Head of caudate nucleus (tissue), 42 donors: ENCODE measurements at regions of chr10 and their contacts with region 1.

Region 1: DNA sequence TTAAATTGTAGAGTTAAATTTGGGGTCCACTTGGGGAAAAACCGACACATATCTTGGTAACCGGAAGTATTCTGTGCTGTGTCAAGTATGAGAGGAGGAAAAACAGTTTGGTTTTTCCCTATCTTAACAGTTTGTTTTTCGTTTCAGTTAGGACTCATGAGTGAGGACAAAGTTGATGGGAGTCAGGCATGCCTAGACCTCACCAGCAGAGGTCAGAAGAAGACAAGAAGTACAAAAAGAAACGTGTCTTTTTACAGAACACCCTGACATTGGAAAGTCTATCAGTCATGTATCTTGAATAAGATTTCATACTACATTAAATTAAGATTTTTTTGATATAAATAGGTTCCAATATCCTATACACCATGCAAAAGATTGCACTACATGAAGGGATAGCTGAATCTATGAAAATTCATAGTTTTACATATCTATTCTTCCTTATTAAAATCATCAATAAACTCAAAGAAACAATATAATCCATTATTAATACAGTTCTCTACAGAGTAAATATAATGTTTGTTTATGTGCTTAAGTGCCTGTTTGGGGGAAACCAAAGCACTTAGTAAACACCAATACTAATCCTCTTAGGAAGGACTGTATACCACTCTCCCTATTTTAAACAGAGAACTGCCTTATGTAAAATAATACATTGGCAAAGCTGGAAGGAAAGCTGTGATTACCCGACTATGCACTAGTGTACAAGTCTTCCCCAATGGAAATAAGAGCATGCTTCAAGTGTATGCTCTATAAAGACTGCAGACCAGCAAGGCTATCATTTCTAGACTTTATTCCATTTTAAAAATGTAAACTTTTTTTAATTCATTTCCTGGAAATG is 95.6 kb downstream of the USP6NL start:
- DNase-seq: peak in 34 of 42 donors; percentile 9 to 80 (median 57)

Region 2: DNA sequence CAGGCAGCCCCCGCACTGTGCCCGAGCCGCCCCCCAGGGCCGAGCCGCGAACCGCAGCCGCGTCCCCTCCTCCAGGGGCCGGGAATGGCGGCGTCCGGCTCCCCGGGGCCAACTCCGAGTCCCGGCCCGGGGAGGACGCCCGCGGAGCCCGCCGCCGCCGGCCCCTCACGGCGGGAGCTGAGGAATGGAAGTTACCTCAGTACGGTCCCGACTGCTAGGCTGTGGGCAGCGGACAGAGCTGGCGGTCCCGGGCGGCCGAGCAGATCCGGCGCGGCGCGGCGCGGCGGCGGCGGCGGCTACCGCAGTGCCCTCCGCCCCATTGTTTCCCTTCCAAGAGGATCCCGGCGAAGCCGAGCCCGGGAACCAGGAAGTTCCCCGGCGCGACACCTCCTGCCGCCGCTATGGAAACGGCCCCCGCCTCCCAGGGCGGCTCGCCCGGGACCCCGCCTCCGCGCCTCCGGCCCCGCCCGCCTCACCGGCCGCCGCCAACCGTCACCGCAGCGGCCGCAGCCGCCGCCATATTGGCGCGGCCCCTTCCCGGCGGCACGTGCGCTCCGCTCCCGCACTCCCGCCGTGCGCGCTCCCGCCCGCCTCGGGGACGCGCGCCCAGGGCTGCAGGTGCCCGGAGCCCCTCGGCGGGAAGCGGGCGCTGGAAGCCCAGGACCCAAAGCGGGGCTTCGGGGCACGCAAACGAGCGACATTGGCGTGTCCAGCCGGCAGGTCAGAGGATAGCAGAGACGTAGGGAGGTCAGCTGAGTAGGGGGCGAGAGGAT is 95.6 kb after region 1 on chr10 and contains the start of gene USP6NL:
- intact Hi-C with region 1: loop called (anchors 10 kb)
- DNase-seq: peak; percentile 43 to 91 (median 83)

Region 3: DNA sequence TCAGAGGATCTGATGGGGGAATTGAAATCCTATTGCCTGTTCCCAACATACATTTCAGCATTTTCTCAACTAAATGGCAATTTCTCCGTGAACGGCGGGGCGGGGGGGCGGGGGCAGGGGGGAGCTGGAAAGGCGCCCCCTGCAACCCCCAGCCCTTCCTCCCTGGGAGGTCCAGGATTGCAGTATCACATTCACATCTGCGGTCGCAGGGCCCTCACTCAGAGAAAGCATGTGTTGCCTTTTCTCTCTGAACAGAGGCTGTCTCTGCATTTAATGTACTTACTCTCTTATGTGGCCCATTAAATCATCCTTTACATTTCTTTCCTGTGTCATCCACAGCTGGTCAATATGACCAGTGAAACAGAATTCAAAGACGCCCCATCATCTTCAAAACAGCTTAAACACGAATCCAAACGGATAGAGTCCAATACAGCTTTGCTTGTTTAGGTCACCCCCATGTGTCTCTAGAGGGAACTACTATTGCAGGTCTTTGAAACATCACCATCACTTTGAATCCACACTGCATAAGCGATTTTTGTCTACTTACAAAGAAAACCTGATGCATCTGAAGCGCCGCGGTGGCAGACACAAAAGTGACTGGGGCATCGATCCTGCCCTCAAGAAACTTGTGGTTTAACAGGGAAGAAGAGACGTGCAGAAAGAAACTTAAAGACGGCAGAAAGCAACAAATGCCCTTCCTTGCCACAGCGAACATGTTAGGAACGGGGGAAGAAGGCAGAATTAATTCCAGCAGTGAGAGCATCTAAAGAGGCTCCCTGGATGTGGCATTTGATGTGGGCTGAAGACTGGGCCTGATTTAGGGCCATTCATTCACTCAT is 209.3 kb after region 1 on chr10:
- intact Hi-C with region 1: loop called (anchors 5 kb)
- DNase-seq: peak in 9 of 42 donors; percentile 23 to 70 (median 30)

Region 4: DNA sequence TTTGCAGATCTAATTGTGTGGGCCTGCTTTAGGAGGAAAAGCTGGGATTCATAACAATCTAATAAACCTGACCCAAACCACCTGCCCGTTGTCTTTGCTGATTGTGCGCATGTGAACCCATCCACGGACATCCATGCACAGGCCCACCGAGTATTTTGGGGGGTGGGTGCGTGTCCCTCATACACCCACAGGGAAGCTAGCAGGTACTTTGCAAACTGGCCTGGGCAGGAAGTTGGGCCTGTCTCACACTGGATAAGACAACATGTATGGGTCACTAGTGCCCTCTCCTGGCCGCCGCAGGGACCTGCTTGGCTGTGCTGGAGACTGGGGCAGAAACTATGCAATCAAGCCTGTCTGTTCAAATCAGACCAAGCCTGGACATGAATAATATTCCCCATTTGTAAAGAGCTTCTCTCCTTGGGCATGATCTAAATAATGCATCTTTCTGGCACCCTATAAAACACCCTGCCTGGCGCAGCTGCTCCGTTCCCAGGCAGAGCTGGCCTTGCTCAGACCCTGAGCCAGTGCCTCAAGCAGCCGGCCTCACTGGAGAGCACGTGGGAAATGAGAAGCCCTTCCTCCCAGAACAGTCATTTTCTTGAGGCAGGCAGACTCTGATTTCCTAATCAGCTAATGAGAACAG is 242.1 kb after region 1 on chr10:
- intact Hi-C with region 1: loop called (anchors 5 kb)
- DNase-seq: peak; percentile 62 to 93 (median 86)